Dorsolateral prefrontal cortex (tissue), 120 donors: ENCODE measurements at regions of chr21 and their contacts with region 1.

Region 1: DNA sequence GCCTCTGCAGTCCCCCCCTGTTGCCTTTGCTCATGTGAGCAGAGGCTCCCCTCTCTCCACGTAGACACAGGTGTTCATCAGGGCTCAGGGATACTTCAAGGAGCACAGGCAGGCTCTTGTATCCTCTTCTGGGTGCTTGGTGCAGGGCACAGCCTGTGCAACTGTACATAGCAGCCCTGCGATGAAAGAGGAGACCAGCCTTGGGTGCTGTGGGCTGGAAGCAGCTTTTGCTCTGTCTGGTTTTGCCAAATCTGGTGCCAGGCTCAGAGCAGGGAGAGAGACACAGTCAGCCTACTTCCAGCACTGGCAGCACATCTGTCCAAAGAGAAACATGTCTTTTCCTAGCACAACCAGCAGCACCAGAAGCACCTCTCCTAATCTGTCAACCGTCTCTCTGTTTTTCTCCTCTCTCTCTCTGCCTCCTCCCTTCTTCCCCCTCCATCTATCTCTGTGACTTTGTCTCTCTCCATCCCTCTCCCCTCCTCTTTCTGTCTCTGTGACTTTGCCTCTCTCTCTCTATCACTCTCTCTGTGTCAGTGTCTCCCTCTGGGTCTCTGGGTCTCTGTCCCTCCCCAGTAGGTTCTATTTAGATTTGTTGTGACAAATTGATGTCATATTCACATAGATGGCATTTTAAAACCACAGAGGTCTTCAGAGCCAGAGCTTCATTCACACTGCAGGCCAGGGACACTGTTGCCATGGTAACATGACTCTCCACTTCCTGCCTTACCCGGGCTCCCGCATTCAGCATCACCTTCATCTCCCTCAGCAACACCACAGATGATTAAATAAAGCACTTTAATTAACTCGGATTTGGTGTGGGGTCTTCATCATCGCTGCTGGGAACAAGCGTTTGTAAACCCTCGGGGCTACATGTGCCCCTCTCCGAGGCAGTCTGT is 132.4 kb downstream of the ETS2 start:
- DNase-seq: peak in 5 of 10 donors; percentile 50 to 65 (median 56)
- H3K4me3 ChIP-seq: no peak overlapping the region
- H3K27ac ChIP-seq: peak overlapping the region in 37 of 59 donors; percentile 2 to 87 (median 48)
- H3K27me3 ChIP-seq: no peaks in the 10 kb centered on the region
- CTCF ChIP-seq: no peak

Region 2: GRCh38 chr21:38831526-38832467 is 106.3 kb before region 1 on chr21:
- intact Hi-C with region 1: loop called in 1 of 2 experiments (anchors 5 kb)
- DNase-seq: no peak
- H3K4me3 ChIP-seq: no peak overlapping the region
- H3K27ac ChIP-seq: peak overlapping the region in 8 of 59 donors; percentile 8 to 73 (median 26)
- H3K27me3 ChIP-seq: no peaks in the 10 kb centered on the region
- CTCF ChIP-seq: no peak

Region 3: GRCh38 chr21:38869946-38870345 is 68.1 kb before region 1 on chr21:
- intact Hi-C with region 1: no loop called
- DNase-seq: no peak
- H3K4me3 ChIP-seq: no peak overlapping the region
- H3K27ac ChIP-seq: no peak overlapping the region
- H3K27me3 ChIP-seq: no peaks in the 10 kb centered on the region
- CTCF ChIP-seq: no peak